ENCODE measurements at regions of chrX and their contacts with region 1.

Region 1: DNA sequence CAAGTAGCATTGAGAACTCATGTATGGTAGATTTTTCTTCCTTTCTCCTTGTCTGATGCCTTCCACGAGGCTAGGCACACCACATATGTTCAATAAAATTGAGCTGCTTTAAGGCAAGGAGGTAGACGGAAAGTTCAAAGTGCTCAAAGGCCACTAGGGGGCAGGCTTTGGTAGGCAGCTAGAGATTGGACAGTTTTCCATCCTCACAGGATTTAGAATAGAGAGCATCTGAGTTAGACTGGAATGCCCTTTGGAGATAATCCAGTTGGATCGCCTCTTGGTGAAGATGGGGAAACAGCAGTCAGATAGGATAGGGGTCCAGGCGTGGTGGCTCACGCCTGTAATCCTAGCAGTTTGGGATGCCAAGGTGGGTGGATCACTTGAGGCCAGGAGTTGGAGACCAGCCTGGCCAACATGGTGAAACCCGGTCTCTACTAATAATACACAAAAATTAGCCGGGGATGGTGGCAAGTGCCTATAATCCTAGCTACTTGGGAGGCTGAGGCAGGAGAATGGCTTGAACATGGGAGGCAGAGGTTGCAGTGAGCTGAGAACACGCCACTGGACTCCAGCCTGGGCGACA is 30.4 kb downstream of the ELF4 start:
- DNase-seq: peak; percentile 55 to 65
- ATAC-seq: peak; percentile 60 to 85 (median 67)
- H3K4me3 ChIP-seq: no peak overlapping the region
- H3K27ac ChIP-seq: no peak overlapping the region
- H3K4me1 ChIP-seq: no peaks in the 10 kb centered on the region
- H3K27me3 ChIP-seq: no peaks in the 10 kb centered on the region
- CTCF ChIP-seq: peak; percentile 75

Region 2: GRCh38 chrX:130120746-130121504 is 41.0 kb after region 1 on chrX:
- intact Hi-C with region 1: loop called in 1 of 2 experiments (anchors 2 kb)
- DNase-seq: peak; percentile 71 to 86
- ATAC-seq: peak; percentile 75 to 91 (median 82)
- H3K4me3 ChIP-seq: peak overlapping the region; percentile 62
- H3K27ac ChIP-seq: peak overlapping the region; percentile 39
- H3K4me1 ChIP-seq: no peaks in the 10 kb centered on the region
- H3K27me3 ChIP-seq: no peaks in the 10 kb centered on the region
- CTCF ChIP-seq: peak; percentile 54

Region 3: DNA sequence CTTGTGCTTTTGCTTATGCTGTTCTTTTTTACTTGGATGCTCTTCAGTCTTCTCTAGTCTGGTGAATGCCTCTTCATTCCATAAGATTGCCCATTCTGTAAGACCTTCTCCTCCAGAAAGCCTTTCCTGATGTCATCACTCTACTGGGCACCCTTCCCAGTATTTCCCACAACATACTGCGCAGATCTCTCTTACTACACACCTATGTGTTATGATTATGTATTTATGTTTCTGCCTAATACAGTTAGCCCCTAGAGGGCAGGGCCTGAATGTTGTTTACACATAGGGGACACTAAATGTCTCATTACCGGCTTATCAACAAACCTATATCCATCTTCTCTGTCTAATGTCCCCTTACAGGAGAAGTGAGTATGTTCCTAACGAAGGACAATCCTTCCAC is 64.6 kb after region 1 on chrX:
- intact Hi-C with region 1: no loop called
- DNase-seq: no peak
- ATAC-seq: no peak
- H3K4me3 ChIP-seq: no peak overlapping the region
- H3K27ac ChIP-seq: no peak overlapping the region
- H3K4me1 ChIP-seq: no peaks in the 10 kb centered on the region
- H3K27me3 ChIP-seq: peaks cover 0 to 2% (median 0%) of the 10 kb centered on the region in 3 donors
- CTCF ChIP-seq: no peak

Region 4: DNA sequence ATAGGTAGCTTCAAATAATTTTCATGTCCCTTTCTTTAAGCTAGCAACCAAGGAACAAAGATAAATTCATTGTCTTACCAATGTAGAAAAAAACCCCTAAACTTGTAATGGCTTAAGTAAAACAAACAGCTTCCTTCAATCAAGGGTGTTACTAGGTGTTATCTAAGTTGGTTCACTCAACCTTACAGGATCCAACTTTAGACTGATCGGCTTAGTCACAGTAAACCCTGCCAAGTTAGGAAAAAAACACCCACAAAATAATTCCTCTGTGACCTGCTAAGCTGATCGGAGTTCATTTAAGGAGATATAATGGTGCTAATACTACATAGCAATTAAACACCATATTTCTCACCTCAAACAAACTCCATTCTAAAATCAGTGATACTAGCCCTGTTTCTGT is 75.6 kb after region 1 on chrX:
- intact Hi-C with region 1: no loop called
- DNase-seq: no peak
- ATAC-seq: peak in 2 of 4 donors; percentile 73 to 88
- H3K4me3 ChIP-seq: no peak overlapping the region
- H3K27ac ChIP-seq: no peak overlapping the region
- H3K4me1 ChIP-seq: no peaks in the 10 kb centered on the region
- H3K27me3 ChIP-seq: peaks cover 0 to 4% (median 0%) of the 10 kb centered on the region in 3 donors
- CTCF ChIP-seq: no peak

Region 5: GRCh38 chrX:130170752-130171445 is 91.0 kb after region 1 on chrX:
- intact Hi-C with region 1: no loop called
- DNase-seq: peak in 1 of 2 donors; percentile 37
- ATAC-seq: peak; percentile 25 to 58 (median 42)
- H3K4me3 ChIP-seq: peak overlapping the region; percentile 64
- H3K27ac ChIP-seq: no peak overlapping the region
- H3K4me1 ChIP-seq: no peaks in the 10 kb centered on the region
- H3K27me3 ChIP-seq: peaks cover 0 to 4% (median 0%) of the 10 kb centered on the region in 3 donors
- CTCF ChIP-seq: no peak

Region 6: GRCh38 chrX:130190801-130191200 is 110.9 kb after region 1 on chrX:
- intact Hi-C with region 1: loop called (anchors 1 to 2 kb)
- DNase-seq: no peak
- ATAC-seq: no peak
- H3K4me3 ChIP-seq: no peak overlapping the region
- H3K27ac ChIP-seq: no peak overlapping the region
- H3K4me1 ChIP-seq: no peaks in the 10 kb centered on the region
- H3K27me3 ChIP-seq: no peaks in the 10 kb centered on the region
- CTCF ChIP-seq: no peak

Region 7: DNA sequence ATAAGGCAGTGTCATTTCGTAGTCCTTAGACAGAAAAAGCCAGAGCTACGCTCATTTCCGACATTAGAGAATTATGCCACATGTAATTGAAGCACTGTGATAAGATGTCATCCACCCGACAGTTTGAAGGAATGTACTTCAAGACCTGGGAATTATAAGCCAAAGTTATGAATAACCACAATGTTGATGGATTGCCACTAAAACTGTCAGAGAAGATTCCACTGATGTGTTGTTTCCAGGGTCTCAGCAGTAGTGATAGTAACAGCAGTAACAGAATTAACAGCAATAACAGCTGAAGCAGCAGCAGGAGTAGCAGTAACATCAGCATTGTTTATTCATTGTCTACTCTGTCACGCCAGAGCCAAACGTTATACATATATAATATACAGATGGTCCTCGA is 116.6 kb after region 1 on chrX:
- intact Hi-C with region 1: loop called (anchors 1 to 2 kb)
- DNase-seq: no peak
- ATAC-seq: no peak
- H3K4me3 ChIP-seq: no peak overlapping the region
- H3K27ac ChIP-seq: no peak overlapping the region
- H3K4me1 ChIP-seq: no peaks in the 10 kb centered on the region
- H3K27me3 ChIP-seq: no peaks in the 10 kb centered on the region
- CTCF ChIP-seq: no peak

Region 8: GRCh38 chrX:131521824-131522223 is 1441.9 kb after region 1 on chrX:
- intact Hi-C with region 1: no loop called
- DNase-seq: no peak
- ATAC-seq: no peak
- H3K4me3 ChIP-seq: no peak overlapping the region
- H3K27ac ChIP-seq: no peak overlapping the region
- H3K4me1 ChIP-seq: no peaks in the 10 kb centered on the region
- H3K27me3 ChIP-seq: peaks cover 0 to 4% (median 0%) of the 10 kb centered on the region in 3 donors
- CTCF ChIP-seq: no peak

Measured in psoas muscle (tissue), 8 donors.